ENCODE measurements at regions of chr11 and their contacts with region 1.

Region 1: GRCh38 chr11:3841426-3842350 is 929 bp upstream of the RHOG start:
- DNase-seq: peak; percentile 68 to 85
- ATAC-seq: peak; percentile 82 to 83
- H3K4me3 ChIP-seq: peak overlapping the region; percentile 79 to 91 (median 86)
- H3K27ac ChIP-seq: peak overlapping the region; percentile 94 to 99 (median 97)
- H3K4me1 ChIP-seq: peaks cover 10 to 19% of the 10 kb centered on the region in 2 donors
- H3K27me3 ChIP-seq: no peaks in the 10 kb centered on the region
- CTCF ChIP-seq: peak; percentile 67 to 89 (median 75)
- POLR2A ChIP-seq: peak in 1 of 2 donors; percentile 67

Region 2: GRCh38 chr11:3880724-3881123 is 39.0 kb after region 1 on chr11:
- in situ Hi-C with region 1: no loop called
- intact Hi-C with region 1: no loop called
- DNase-seq: no peak
- ATAC-seq: no peak
- H3K4me3 ChIP-seq: no peak overlapping the region
- H3K27ac ChIP-seq: peak overlapping the region; percentile 37 to 77 (median 53)
- H3K4me1 ChIP-seq: peaks cover 62 to 75% of the 10 kb centered on the region in 2 donors
- H3K27me3 ChIP-seq: no peaks in the 10 kb centered on the region
- CTCF ChIP-seq: no peak
- POLR2A ChIP-seq: no peak

Region 3: DNA sequence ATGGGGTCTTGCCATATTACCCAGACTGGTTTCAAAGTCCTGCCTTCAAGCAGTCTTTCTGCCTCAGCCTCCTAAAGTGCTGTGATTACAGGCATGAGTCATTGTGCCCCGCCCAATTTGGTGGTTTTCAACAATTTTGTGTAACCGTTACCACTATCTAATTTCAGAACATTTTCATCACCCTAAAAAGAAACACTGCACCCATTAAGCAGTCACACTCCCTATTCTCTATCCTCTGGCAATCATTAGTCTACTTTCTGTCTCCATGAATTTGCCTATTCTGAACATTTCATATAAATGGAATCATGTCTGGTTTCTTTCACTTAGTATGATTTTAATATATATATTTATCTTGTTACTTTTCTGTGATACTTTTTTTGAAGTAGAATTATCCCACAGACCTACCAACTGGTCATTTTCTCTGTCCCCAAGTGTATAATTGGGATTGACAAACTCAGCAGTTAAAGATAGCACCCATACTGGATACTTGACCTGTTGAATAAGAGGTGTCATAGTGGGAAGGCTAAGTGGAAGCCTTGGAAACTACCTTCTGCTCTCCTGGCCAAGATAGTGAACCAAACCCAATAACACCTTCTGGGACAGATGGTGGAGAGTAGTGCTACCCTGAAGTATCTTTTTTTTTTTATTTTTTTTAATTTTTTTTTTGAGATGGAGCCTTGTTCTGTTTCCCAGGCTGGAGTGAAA is 78.6 kb after region 1 on chr11:
- in situ Hi-C with region 1: no loop called
- intact Hi-C with region 1: no loop called
- DNase-seq: peak; percentile 56 to 67
- ATAC-seq: peak; percentile 71 to 75
- H3K4me3 ChIP-seq: no peak overlapping the region
- H3K27ac ChIP-seq: peak overlapping the region; percentile 42 to 75 (median 64)
- H3K4me1 ChIP-seq: peaks cover 33 to 36% of the 10 kb centered on the region in 2 donors
- H3K27me3 ChIP-seq: no peaks in the 10 kb centered on the region
- CTCF ChIP-seq: no peak
- POLR2A ChIP-seq: no peak

Region 4: DNA sequence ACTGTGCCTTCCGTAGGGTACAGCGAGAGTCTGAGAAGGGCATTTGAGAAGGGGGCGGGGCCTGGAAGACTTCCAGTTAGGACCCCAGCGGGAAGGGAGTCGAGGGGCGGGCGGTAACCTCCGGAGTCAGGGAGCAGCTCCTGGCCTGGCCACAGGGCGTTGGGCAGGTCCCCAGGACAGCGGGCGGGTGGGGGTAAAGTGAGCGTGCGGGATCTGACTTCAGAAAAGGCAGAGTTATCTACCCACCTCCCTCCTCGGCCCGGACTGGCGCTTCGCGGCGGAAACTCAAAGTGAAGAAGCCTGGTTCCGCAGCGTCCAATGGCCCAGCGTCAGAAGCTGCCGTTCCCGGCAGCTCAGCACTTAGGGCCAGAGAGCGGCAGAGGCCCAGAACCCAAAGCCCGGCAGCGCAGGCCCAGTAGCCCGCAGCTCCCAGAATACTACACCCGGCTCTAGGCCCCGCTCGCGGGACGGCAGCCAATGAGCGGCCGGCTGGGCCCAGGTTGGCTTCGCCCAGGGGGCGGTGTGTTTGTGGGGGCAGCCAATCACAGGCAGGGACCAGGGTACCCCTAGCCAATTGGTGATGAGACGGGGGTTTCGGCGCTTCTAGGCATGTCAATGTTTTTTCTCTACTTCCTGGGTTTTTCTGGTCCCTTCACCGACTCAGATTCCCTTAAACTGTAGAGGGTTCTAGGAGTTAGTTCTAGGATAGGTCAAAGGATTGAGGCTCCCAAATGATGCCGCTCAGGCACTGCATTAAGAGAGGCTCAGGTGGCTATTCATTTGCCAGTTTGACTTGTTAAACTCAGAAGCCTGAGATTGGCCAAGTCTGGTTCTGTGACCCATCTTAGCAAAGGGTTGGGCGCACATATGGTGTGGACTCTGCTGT is 766.3 kb after region 1 on chr11 and contains the start of gene TRIM68:
- in situ Hi-C with region 1: loop called in 1 of 4 experiments (anchors 25 kb)
- intact Hi-C with region 1: no loop called
- DNase-seq: peak; percentile 93 to 95
- ATAC-seq: peak; percentile 95 to 96
- H3K4me3 ChIP-seq: peak within 1 kb of the TSS; percentile 64 to 76 (median 72)
- H3K27ac ChIP-seq: peak within 1 kb of the TSS; percentile 86 to 88 (median 87)
- H3K4me1 ChIP-seq: peaks cover 16 to 19% of the 10 kb centered on the region in 2 donors
- H3K27me3 ChIP-seq: no peaks in the 10 kb centered on the region
- CTCF ChIP-seq: peak in 2 of 5 experiments; percentile 11 to 26
- POLR2A ChIP-seq: peak; percentile 51 to 67
- total RNA-seq, gene TRIM68: 5.8 to 6.3 (median 6.0) TPM